GM10248 (cell line): ENCODE measurements at regions of chr19 and their contacts with region 1.

Region 1: GRCh38 chr19:49133621-49134454 is 14.5 kb downstream of the PPFIA3 start:
- DNase-seq: no peak
- CTCF ChIP-seq: no peak

Region 2: DNA sequence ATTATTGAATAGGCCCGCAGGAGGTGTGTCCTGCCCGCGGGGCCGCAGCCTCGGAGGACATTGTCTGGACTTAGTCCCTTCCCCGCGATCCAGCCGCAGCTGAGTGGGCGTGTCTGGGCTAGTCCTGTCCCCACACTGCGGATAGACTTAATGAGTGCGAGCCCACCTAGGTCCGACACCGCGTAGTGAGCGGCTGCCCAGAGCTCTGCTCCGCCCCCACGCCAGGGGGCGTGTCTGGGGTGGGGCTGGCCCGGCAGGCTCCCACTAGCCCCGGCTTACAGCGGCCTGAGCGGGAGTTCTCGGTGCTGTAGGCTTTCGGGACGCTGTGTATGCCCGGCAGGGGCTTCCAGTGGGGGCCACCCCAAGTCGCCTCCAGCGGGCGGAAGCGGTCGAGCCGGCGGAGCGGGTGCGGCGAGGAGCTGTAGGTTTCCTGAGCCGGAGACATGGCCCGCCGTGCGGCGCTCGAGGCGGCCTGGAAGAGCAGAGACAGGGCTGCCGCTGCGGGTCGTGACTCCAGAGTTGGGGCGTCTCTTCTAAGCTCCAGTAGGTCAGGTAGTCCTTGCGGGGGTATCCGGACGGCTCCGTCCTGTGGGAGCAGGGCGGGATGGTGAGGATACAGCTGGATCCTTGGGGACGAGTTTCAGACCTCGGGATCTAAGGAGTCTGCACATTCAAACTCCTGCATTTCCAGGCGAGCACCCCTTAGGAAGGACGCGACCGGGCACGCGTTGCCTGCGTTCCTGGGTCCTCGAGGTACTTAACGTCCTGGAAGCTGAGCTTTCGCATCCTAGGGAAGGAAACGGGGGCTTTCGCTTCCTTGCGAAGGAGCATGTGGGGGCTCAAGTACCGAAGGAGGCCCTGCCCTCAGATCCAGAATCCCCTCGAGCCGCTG is 77.6 kb before region 1 on chr19:
- CTCF ChIA-PET with region 1: no interaction called
- POLR2A ChIA-PET with region 1: no interaction called
- DNase-seq: peak; percentile 84
- CTCF ChIP-seq: peak; percentile 9

Region 3: DNA sequence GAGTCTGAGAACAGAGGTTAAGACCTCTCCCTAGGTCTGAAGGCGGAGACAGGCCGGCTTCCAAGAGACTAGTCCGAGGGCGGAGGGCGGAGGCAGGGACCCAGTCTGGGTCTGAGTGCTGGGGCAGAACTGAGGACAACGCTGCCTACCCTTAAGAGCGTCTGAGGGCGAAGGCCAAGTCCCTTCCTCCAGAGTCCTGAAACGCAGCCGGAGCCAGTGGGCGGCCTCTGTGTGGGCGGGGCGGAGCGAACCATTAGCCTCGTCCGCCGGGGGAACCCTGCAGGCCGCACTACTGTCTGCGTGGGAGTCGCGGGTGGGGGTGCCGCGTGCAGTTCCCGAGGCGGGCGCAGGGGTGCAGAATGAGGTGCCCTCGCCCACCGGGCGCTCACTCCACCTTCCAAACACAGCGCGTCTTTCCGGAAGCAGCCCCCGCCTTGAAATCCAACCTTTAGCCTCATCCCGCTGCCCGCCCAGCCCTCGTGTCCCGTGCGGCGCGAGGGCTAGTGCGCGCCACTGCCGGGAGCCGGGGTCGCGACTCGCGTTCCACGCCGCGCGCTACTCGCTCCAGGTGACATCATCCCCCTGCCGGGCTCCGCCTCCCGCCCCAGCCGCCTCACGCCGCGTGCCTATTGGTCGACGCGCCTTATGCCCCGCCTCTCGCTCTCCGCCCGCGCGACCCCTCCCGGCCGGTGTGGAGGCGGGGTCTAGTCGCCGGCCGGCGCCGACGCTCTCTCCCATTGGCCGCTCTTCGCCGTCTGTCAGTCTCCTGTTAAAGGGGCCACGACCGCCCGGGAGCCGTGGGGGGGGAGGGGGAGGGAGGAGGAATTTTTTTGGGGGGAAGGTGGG is 15.1 kb before region 1 on chr19 and contains the start of gene C19orf73:
- CTCF ChIA-PET with region 1: interaction called, 10 read pairs
- POLR2A ChIA-PET with region 1: no interaction called
- DNase-seq: peak; percentile 99
- CTCF ChIP-seq: no peak

Region 4: GRCh38 chr19:49148784-49149651 is 15.2 kb after region 1 on chr19:
- CTCF ChIA-PET with region 1: interaction called, 43 read pairs
- POLR2A ChIA-PET with region 1: no interaction called
- DNase-seq: peak; percentile 86
- CTCF ChIP-seq: no peak

Region 5: GRCh38 chr19:49255674-49256073 is 121.8 kb after region 1 on chr19:
- CTCF ChIA-PET with region 1: no interaction called
- POLR2A ChIA-PET with region 1: no interaction called
- DNase-seq: no peak
- CTCF ChIP-seq: no peak

Region 6: DNA sequence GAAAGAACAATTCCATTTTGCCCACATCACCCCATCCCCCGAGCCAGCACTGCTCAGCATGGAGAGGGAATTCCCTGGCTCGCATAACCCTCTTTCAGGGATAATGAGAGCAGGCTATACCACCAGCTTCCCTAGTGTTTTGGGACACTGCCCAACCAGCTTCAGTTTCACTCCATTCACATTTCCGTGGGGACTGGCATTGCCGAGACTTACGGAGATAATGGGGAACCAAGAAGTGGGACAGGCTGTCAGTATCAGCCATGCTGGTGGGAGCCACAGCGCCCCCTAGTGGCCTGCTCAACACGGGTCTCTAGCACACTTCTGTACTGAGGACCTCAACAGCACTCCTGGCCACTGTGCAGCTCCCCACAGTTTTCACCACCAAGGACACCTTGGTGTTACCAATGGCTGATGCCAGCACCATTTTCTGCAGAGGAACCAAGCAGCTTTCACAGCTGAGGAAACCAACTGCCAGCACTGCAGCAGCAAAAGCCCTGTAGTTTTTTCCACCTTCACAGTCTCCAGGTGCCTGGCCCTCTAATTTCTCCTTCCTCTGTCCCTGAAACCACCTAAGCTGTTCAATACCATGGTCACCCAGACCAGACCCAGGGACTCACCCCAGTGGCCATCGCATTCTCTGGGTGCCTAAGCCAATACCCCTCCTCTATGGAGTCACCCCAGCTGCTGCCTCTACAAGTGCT is 167.5 kb after region 1 on chr19:
- CTCF ChIA-PET with region 1: no interaction called
- POLR2A ChIA-PET with region 1: no interaction called
- DNase-seq: peak; percentile 92
- CTCF ChIP-seq: peak; percentile 80